ENCODE measurements at regions of chr15 and their contacts with region 1.

Region 1: DNA sequence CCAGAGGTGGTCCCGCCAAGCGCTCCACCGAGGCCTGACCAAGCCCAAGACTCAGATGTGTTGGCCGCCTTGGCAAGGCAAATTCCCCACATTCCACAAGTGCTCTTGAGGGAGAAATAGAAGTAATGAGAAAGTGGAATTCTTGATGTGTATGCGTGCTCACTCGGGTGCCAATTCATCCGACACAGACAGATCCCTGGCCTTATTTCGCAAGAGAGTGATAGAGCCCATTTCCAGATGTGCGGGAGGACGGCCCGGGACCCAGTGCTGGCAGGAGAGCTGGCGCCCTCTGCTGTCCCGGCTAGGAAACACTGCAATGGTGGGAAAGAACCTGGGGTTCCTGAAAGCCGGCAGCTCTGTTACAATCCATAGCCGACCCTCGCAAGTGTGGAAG is 76.0 kb downstream of the HMG20A start:
- H3K4me3 ChIP-seq: no peak overlapping the region
- H3K27ac ChIP-seq: no peak overlapping the region
- H3K4me1 ChIP-seq: no peaks in the 10 kb centered on the region
- CTCF ChIP-seq: peak; percentile 87

Region 2: DNA sequence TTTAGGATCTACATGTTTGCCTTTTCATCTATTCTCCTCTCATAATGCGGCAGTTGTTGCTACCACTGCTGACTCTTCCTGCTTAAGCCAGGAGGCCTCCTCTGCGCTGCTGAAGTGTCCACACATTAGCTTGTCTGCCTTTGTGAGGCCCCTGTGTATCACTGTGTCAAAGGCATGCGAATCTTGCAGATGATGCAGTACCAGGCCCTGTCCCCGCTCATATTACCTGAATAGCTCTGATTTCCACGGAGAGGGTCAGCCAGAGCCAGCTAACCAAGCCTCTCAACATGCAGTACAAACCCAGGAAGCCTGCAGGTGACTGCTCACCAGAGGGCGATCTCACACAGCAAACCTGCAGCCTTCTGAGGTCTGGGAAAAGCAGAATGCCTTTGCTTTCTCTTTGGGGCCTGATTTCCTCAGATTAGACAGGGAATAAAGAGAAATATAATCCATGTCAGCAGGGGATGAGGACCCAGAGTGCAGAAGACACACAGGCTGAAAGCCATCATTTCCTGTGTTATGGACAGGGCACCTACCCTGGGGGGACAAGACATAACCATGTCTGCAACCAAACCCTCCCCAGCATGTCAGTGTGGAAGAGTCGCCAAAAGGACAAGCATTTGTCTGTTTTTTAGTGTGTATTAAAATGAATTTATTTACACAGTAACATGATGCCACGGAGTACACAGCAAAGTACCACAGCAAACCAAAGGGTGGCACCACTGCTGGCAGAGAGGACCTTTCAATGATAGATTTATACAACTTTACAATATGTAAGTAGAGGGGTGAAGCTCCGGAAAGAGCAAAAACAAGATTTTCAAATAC is 389.0 kb before region 1 on chr15:
- CTCF ChIA-PET with region 1: interaction called, 24 read pairs
- POLR2A ChIA-PET with region 1: no interaction called
- H3K4me3 ChIP-seq: no peak overlapping the region
- H3K27ac ChIP-seq: no peak overlapping the region
- H3K4me1 ChIP-seq: no peaks in the 10 kb centered on the region
- CTCF ChIP-seq: peak; percentile 70

Region 3: DNA sequence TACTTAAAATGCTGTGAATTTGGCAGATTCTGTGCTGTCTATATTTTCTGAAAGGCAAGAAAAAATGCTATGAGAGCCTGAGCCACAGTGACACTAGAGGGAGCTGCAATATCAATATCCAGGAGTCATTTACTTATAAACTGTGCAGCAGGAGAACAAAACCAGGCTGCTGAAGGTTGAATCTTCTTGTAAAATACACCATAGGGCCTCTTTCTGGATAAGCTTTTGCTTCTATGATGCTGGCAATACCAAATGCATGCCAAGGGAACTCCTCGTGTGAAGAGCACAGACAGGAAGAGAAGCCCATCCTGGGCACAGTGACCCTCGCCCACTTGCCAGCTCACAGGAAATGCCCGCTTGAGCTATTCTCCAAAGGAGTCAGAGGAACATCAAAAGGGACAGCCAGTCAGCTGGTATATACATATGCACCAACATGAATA is 377.8 kb before region 1 on chr15:
- CTCF ChIA-PET with region 1: interaction called, 117 read pairs
- POLR2A ChIA-PET with region 1: no interaction called
- H3K4me3 ChIP-seq: no peak overlapping the region
- H3K27ac ChIP-seq: no peak overlapping the region
- H3K4me1 ChIP-seq: no peaks in the 10 kb centered on the region
- CTCF ChIP-seq: peak; percentile 25; the same call in 1 of the 2 replicates

Region 4: GRCh38 chr15:77186594-77187011 is 310.1 kb before region 1 on chr15:
- CTCF ChIA-PET with region 1: interaction called, 24 read pairs
- POLR2A ChIA-PET with region 1: no interaction called
- H3K4me3 ChIP-seq: no peak overlapping the region
- H3K27ac ChIP-seq: no peak overlapping the region
- H3K4me1 ChIP-seq: peaks cover 2% of the 10 kb centered on the region; the same call in 1 of the 2 replicates
- CTCF ChIP-seq: peak; percentile 72

Region 5: DNA sequence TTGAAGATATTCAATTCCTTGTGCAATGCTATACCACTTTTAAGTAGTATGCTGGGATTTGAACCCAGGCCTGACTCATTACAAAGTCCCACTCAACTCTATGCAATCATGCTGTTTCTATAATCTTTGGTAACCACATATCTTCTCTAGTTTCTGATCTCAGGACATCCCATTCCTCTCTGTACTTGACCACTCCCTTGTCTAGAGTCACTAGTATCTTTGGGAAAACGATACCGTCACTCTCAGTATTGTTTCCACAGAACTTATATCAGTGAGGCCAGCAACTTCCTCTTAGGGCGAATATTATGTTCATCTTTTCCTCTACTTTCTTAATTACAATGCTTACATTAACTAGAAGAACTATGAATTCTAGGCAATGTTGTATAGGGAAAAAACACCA is 288.5 kb before region 1 on chr15:
- CTCF ChIA-PET with region 1: no interaction called
- POLR2A ChIA-PET with region 1: no interaction called
- H3K4me3 ChIP-seq: no peak overlapping the region
- H3K27ac ChIP-seq: no peak overlapping the region
- H3K4me1 ChIP-seq: no peaks in the 10 kb centered on the region
- CTCF ChIP-seq: no peak

Region 6: GRCh38 chr15:77480859-77481633 is 15.7 kb before region 1 on chr15:
- CTCF ChIA-PET with region 1: interaction called, 16 read pairs
- POLR2A ChIA-PET with region 1: no interaction called
- H3K4me3 ChIP-seq: no peak overlapping the region
- H3K27ac ChIP-seq: no peak overlapping the region
- H3K4me1 ChIP-seq: peaks cover under 1% of the 10 kb centered on the region; the same call in 1 of the 2 replicates
- CTCF ChIP-seq: no peak

Region 7: GRCh38 chr15:77507911-77508310 is 11.2 kb after region 1 on chr15:
- CTCF ChIA-PET with region 1: interaction called, 21 read pairs
- POLR2A ChIA-PET with region 1: no interaction called
- H3K4me3 ChIP-seq: no peak overlapping the region
- H3K27ac ChIP-seq: no peak overlapping the region
- H3K4me1 ChIP-seq: no peaks in the 10 kb centered on the region
- CTCF ChIP-seq: no peak